Common myeloid progenitor, CD34-positive (primary cell): ENCODE measurements at regions of chr15 and their contacts with region 1.

Region 1: DNA sequence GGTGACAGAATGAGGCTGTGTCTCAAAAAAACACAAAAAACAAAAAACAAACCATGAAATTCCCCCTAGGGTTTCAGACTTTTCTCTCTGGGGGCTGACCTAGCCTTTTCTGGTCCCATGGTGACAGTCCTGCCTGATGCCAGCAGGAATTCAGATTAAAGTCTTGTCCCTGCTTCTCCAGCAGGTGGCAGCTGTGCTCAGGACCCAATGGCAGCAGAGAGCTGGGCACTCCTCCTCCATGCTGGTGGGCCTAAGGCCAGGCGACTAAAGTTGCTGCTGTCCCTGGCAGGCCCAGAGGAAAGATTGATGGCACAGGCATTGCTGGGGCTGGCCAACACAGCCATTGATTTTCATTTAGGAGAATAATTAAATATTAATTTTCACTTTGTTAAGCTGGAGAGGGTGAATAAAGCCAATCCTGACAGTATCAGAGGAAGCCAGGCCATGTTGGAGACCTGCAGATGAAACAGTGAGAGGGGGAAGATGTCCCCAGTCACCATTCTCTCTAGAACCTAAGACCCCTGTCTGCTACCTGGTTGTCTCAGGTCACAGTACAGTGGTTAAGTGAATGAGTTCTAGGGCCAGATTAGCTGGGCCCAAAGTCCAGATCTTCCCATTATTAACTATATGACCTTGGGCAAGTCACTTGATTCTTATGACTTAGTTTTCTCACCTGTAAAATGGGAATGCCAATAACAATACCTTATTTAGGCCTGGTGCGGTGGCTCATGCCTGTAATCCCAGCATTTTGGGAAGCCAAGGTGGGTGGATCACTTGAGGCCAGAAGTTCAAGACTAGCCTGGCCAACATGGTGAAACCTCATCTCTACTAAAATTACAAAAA is 7.1 kb downstream of the CELF6 start:
- DNase-seq: peak; percentile 64 to 81 (median 79)
- H3K4me3 ChIP-seq: no peak overlapping the region
- H3K27ac ChIP-seq: no peak overlapping the region
- H3K4me1 ChIP-seq: no peaks in the 10 kb centered on the region
- H3K27me3 ChIP-seq: no peaks in the 10 kb centered on the region

Region 2: DNA sequence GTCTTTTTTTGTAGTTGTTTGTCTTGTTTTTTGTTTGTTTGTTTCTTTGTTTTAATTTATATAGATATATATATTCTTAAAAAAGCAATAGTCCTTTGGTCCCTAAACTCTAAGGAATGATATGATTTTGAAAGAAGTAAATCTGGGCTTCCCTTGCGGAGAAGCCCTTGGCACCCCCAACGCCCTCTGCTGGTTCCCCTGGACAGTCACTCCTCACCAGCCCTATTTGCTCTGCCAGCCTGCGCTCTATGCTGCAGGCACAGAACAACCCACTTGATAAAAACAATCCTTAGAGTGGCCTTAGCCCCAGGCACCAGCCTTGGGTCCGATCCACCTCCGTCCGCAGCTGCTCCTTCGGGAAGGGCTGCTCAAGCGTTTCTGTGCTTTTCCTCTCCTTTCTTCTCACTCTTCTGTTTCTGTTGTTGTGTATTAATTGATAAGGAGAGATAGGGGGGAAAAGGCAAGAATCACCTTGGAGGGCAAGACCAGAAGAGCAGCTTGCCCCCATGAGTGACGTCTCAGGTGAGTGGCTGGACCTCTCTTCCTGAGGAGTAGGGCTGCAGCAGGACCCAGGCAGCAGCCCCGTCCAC is 26.8 kb before region 1 on chr15:
- CTCF ChIA-PET with region 1: interaction called, 13 read pairs
- POLR2A ChIA-PET with region 1: no interaction called
- DNase-seq: peak; percentile 55 to 72 (median 67)
- H3K4me3 ChIP-seq: no peak overlapping the region
- H3K27ac ChIP-seq: no peak overlapping the region
- H3K4me1 ChIP-seq: no peaks in the 10 kb centered on the region
- H3K27me3 ChIP-seq: no peaks in the 10 kb centered on the region